ENCODE measurements at regions of chr3 and their contacts with region 1.

Region 1: DNA sequence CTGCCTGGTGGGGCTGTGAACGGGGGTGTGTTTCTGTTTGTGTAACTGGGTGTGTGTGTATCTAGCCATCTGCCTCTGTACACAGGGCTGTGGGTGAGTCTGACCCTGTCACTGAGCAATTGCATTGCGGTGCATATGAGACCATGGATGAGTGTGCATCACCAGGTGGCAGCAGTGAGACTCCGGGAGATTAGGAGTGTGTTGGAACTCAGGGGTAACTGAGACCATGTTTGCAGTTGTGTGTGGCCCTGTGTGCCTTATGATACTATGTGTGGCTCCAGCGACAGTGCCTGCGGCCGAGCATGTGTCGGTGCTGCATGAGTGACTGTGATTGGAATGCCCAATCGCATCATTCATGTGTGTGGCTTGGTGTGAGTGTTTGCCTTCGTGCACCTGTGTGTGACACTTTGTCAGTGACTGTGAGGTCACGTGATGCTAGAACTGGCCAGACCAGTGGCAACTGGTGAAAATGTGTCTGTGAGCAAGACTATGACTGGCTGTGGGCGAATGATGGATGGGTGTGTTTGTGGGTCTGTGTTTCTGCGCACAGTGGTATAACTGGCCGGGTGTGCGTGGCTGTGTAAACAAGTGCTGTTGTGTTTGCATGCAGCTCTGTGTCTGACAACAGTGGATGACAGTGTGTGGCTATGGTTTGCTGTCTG is 14.0 kb downstream of the VILL start:
- DNase-seq: peak; percentile 51 to 68 (median 62)
- H3K4me3 ChIP-seq: no peak overlapping the region
- H3K27ac ChIP-seq: no peak overlapping the region
- H3K4me1 ChIP-seq: no peaks in the 10 kb centered on the region
- H3K27me3 ChIP-seq: no peaks in the 10 kb centered on the region

Region 2: DNA sequence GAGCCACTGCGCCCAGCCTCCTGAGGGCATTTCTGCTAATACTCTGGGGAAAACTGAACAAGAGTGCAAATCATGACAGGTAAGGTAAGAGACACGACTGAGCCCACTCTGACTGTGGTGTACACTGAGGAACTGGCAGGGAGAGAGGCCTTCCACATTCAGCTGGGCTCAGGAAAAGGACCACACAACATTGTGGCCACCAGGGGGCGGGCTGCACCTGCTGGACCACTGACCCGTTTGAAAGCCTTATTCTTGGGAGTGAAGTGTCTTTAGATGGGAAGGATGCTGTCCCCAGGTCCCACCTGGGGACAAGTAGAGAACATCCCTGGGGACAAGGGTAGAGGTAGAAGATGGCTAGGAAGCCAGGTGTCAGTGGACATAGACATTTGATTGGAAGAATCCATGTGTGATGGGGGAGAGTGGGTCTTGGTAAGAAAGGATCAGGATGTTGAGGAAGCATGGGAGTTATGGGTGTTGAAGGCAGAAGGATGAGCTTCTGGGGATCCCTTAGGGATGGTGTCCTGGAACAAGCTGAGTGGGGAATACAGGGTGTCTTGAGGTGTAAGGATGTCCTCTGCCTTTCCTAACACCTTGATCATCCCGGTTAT is 149.1 kb before region 1 on chr3:
- CTCF ChIA-PET with region 1: interaction called, 32 read pairs
- POLR2A ChIA-PET with region 1: no interaction called
- DNase-seq: peak; percentile 66 to 78 (median 66)
- H3K4me3 ChIP-seq: no peak overlapping the region
- H3K27ac ChIP-seq: no peak overlapping the region
- H3K4me1 ChIP-seq: peaks cover 0 to 11% (median 9%) of the 10 kb centered on the region in 4 experiments
- H3K27me3 ChIP-seq: no peaks in the 10 kb centered on the region

Region 3: GRCh38 chr3:37974121-37975083 is 30.1 kb before region 1 on chr3:
- CTCF ChIA-PET with region 1: interaction called, 23 read pairs
- POLR2A ChIA-PET with region 1: no interaction called
- DNase-seq: peak; percentile 72 to 84 (median 79)
- H3K4me3 ChIP-seq: no peak overlapping the region
- H3K27ac ChIP-seq: no peak overlapping the region
- H3K4me1 ChIP-seq: peaks cover 0 to 3% (median 0%) of the 10 kb centered on the region in 4 experiments
- H3K27me3 ChIP-seq: no peaks in the 10 kb centered on the region

Region 4: GRCh38 chr3:37979541-37980461 is 24.7 kb before region 1 on chr3:
- CTCF ChIA-PET with region 1: interaction called, 23 read pairs
- POLR2A ChIA-PET with region 1: no interaction called
- DNase-seq: no peak
- H3K4me3 ChIP-seq: no peak overlapping the region
- H3K27ac ChIP-seq: no peak overlapping the region
- H3K4me1 ChIP-seq: peaks cover 0 to 1% (median 0%) of the 10 kb centered on the region in 4 experiments
- H3K27me3 ChIP-seq: no peaks in the 10 kb centered on the region

Region 5: GRCh38 chr3:38017442-38018295 is 13.1 kb after region 1 on chr3:
- CTCF ChIA-PET with region 1: interaction called, 50 read pairs
- POLR2A ChIA-PET with region 1: interaction called, 3 read pairs
- DNase-seq: no peak
- H3K4me3 ChIP-seq: no peak overlapping the region
- H3K27ac ChIP-seq: peak overlapping the region in 1 of 2 experiments; percentile 50
- H3K4me1 ChIP-seq: no peaks in the 10 kb centered on the region
- H3K27me3 ChIP-seq: no peaks in the 10 kb centered on the region

Region 6: GRCh38 chr3:38022896-38023709 is 18.6 kb after region 1 on chr3:
- CTCF ChIA-PET with region 1: interaction called, 50 read pairs
- POLR2A ChIA-PET with region 1: no interaction called
- DNase-seq: no peak
- H3K4me3 ChIP-seq: peak overlapping the region in 4 of 7 experiments; percentile 77 to 88 (median 78)
- H3K27ac ChIP-seq: no peak overlapping the region
- H3K4me1 ChIP-seq: peaks cover 8 to 19% (median 14%) of the 10 kb centered on the region in 4 experiments
- H3K27me3 ChIP-seq: peaks cover 0 to 10% (median 8%) of the 10 kb centered on the region in 5 experiments

Measured in common myeloid progenitor, CD34-positive (primary cell).